Ovary (tissue), 10 donors: ENCODE measurements at regions of chr15 and their contacts with region 1.

Region 1: GRCh38 chr15:41989259-41989933 is 17.0 kb upstream of the EHD4 start:
- DNase-seq: peak; percentile 73 to 91 (median 85)
- H3K4me3 ChIP-seq: no peak overlapping the region
- H3K27ac ChIP-seq: no peak overlapping the region
- H3K4me1 ChIP-seq: no peaks in the 10 kb centered on the region
- H3K27me3 ChIP-seq: no peaks in the 10 kb centered on the region
- CTCF ChIP-seq: peak; percentile 78 to 88 (median 85)
- EP300 ChIP-seq: no peak
- POLR2A ChIP-seq: no peak

Region 2: GRCh38 chr15:42056934-42057779 is 67.8 kb after region 1 on chr15:
- intact Hi-C with region 1: loop called in 2 of 4 experiments (anchors 2 to 5 kb)
- DNase-seq: peak; percentile 60 to 80 (median 64)
- H3K4me3 ChIP-seq: peak overlapping the region; percentile 4
- H3K27ac ChIP-seq: no peak overlapping the region
- H3K4me1 ChIP-seq: no peaks in the 10 kb centered on the region
- H3K27me3 ChIP-seq: no peaks in the 10 kb centered on the region
- CTCF ChIP-seq: peak in 2 of 3 donors; percentile 36 to 56
- EP300 ChIP-seq: no peak
- POLR2A ChIP-seq: no peak

Region 3: GRCh38 chr15:42084460-42085235 is 95.3 kb after region 1 on chr15:
- intact Hi-C with region 1: loop called in 3 of 4 experiments (anchors 2 to 5 kb)
- DNase-seq: peak; percentile 32 to 78 (median 59)
- H3K4me3 ChIP-seq: no peak overlapping the region
- H3K27ac ChIP-seq: no peak overlapping the region
- H3K4me1 ChIP-seq: no peaks in the 10 kb centered on the region
- H3K27me3 ChIP-seq: no peaks in the 10 kb centered on the region
- CTCF ChIP-seq: peak; percentile 81 to 88 (median 83)
- EP300 ChIP-seq: no peak
- POLR2A ChIP-seq: no peak